Activated CD8-positive, alpha-beta T cell treated with anti-CD3 and anti-CD28 coated beads for 36 hours (primary cell): ENCODE measurements at regions of chr17 and their contacts with region 1.

Region 1: DNA sequence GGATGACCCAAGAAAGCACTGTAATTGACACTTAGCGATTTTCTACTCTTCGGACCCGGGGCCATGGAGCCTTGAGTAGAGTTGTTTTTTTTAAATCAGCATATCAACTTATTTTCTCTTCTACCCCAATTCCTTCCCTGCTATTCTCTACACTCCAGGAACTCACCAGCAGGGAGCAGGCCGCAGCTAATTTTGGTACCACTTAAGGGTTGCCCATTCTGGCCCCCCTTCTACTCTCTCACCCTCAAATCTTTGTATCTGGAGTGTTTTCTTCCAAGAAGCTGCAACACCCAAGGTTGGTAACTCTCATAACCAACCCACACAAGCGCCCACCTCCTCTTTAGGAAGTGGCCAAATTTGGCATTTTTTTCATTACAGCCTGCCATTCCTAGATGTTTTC is 5.5 kb upstream of the ERAL1 start:
- DNase-seq: peak; percentile 60
- ATAC-seq: peak; percentile 75
- H3K4me3 Mint-ChIP-seq: no peak overlapping the region
- H3K27ac Mint-ChIP-seq: peak overlapping the region; percentile 24
- H3K4me1 Mint-ChIP-seq: peaks cover 9% of the 10 kb centered on the region
- H3K27me3 Mint-ChIP-seq: no peaks in the 10 kb centered on the region
- CTCF ChIP-seq: no peak

Region 2: DNA sequence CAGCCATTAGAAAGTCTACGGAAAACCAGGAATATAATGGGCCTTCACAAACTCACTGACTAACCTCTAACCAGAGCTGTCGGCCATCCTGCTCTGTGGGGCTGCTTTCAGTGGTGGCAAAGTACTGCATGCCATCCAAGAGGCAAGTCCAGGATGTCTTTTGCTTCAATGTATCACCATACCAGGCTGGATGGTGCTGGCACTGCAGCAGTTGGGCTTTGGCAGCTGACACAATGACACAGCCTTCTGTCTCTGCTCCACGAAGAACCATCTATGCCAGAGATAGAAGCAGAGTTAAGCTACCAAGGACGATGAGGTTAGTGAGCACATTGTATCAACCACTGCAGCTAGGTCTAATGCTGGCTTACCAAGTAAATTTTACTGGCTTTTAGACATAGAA is 225.6 kb before region 1 on chr17:
- CTCF ChIA-PET with region 1: no interaction called
- POLR2A ChIA-PET with region 1: no interaction called
- intact Hi-C with region 1: no loop called
- DNase-seq: no peak
- ATAC-seq: no peak
- H3K4me3 Mint-ChIP-seq: no peak overlapping the region
- H3K27ac Mint-ChIP-seq: no peak overlapping the region
- H3K4me1 Mint-ChIP-seq: peaks cover 3% of the 10 kb centered on the region
- H3K27me3 Mint-ChIP-seq: no peaks in the 10 kb centered on the region
- CTCF ChIP-seq: no peak

Region 3: DNA sequence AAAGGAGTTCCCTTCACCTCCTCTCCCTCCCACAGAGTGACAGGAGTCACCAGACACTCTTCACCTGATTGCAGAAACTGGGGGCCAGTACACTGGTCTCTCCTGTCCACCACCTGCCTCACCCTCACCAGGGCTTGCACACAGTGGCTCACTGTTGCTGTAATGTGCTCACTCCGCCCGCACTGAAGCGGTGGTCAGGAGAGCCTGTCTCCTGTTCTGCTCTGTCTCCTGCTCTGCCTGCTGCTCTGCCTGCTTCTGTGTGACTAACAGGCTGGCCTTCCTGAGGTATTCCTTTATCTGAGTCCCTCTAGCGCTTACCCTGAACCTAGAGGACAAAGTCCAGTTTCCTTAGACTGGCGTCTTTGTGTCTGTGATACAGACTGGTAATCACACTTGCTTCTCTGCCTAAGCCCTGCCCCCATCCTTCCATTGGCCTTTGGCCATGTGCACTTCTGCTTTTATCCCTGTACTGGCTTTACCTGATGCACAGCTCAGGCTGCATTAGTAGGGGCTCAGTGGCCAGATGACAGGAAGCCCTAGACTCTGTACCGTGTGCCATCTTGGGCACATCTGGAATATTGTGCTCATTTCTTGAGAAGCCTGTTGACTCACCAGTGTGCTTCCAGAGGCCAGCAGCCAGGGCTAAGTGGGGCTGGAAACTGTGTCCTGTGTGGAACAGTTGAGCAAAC is 150.9 kb before region 1 on chr17:
- CTCF ChIA-PET with region 1: no interaction called
- POLR2A ChIA-PET with region 1: no interaction called
- intact Hi-C with region 1: no loop called
- DNase-seq: no peak
- ATAC-seq: no peak
- H3K4me3 Mint-ChIP-seq: no peak overlapping the region
- H3K27ac Mint-ChIP-seq: no peak overlapping the region
- H3K4me1 Mint-ChIP-seq: no peaks in the 10 kb centered on the region
- H3K27me3 Mint-ChIP-seq: no peaks in the 10 kb centered on the region
- CTCF ChIP-seq: no peak

Region 4: GRCh38 chr17:28871056-28871579 is 21.8 kb after region 1 on chr17:
- CTCF ChIA-PET with region 1: interaction called, 24 read pairs
- POLR2A ChIA-PET with region 1: no interaction called
- intact Hi-C with region 1: no loop called
- DNase-seq: peak; percentile 75
- ATAC-seq: peak; percentile 96
- H3K4me3 Mint-ChIP-seq: no peak overlapping the region
- H3K27ac Mint-ChIP-seq: peak overlapping the region; percentile 98
- H3K4me1 Mint-ChIP-seq: peaks cover 24% of the 10 kb centered on the region
- H3K27me3 Mint-ChIP-seq: no peaks in the 10 kb centered on the region
- CTCF ChIP-seq: no peak

Region 5: GRCh38 chr17:28889996-28890395 is 40.7 kb after region 1 on chr17:
- CTCF ChIA-PET with region 1: interaction called, 21 read pairs
- POLR2A ChIA-PET with region 1: interaction called, 3 read pairs
- intact Hi-C with region 1: no loop called
- DNase-seq: no peak
- ATAC-seq: no peak
- H3K4me3 Mint-ChIP-seq: no peak overlapping the region
- H3K27ac Mint-ChIP-seq: peak overlapping the region; percentile 87
- H3K4me1 Mint-ChIP-seq: peaks cover 47% of the 10 kb centered on the region
- H3K27me3 Mint-ChIP-seq: no peaks in the 10 kb centered on the region
- CTCF ChIP-seq: no peak

Region 6: DNA sequence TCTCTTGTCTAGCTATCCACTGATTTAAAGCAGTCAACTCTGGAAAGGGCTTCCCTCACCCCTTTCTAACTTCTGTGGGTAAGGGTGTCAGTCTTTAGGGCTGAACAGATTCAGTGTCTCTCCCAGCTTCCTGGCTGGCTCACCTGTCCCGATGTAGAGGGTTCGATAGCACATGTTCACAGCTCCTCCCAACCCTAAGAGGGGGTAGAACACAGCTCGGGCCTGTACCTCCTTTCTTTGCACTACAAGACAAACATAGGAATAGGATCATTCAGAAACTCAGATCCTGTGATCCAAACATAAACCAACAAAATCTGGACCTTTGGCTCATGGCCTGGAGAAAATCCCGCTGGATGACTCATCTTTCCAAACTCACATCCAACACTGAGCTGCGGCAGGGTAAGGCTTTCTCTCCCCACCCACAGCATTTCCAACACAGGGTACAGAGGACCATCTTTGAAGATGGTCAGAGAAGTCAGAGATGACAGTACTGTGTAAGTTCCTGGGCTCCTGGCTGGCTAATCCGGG is 59.4 kb after region 1 on chr17:
- CTCF ChIA-PET with region 1: interaction called, 61 read pairs
- POLR2A ChIA-PET with region 1: no interaction called
- intact Hi-C with region 1: loop called (anchors 5 kb)
- DNase-seq: no peak
- ATAC-seq: no peak
- H3K4me3 Mint-ChIP-seq: no peak overlapping the region
- H3K27ac Mint-ChIP-seq: peak overlapping the region; percentile 40
- H3K4me1 Mint-ChIP-seq: peaks cover 2% of the 10 kb centered on the region
- H3K27me3 Mint-ChIP-seq: no peaks in the 10 kb centered on the region
- CTCF ChIP-seq: no peak